Activated CD4-positive, alpha-beta memory T cell treated with anti-CD3 and anti-CD28 coated beads for 36 hours (primary cell): ENCODE measurements at regions of chr9 and their contacts with region 1.

Region 1: GRCh38 chr9:94213511-94214124 is 45.5 kb upstream of the ZNF169 start:
- DNase-seq: peak; percentile 82
- H3K4me3 Mint-ChIP-seq: no peak overlapping the region
- H3K27ac Mint-ChIP-seq: no peak overlapping the region
- H3K4me1 Mint-ChIP-seq: peaks cover 3% of the 10 kb centered on the region
- H3K27me3 Mint-ChIP-seq: peaks cover 17% of the 10 kb centered on the region

Region 2: GRCh38 chr9:93682232-93682968 is 531.2 kb before region 1 on chr9:
- CTCF ChIA-PET with region 1: interaction called, 11 read pairs
- POLR2A ChIA-PET with region 1: no interaction called
- intact Hi-C with region 1: loop called (anchors 5 kb)
- DNase-seq: peak; percentile 76
- H3K4me3 Mint-ChIP-seq: no peak overlapping the region
- H3K27ac Mint-ChIP-seq: no peak overlapping the region
- H3K4me1 Mint-ChIP-seq: no peaks in the 10 kb centered on the region
- H3K27me3 Mint-ChIP-seq: peaks cover 6% of the 10 kb centered on the region

Region 3: DNA sequence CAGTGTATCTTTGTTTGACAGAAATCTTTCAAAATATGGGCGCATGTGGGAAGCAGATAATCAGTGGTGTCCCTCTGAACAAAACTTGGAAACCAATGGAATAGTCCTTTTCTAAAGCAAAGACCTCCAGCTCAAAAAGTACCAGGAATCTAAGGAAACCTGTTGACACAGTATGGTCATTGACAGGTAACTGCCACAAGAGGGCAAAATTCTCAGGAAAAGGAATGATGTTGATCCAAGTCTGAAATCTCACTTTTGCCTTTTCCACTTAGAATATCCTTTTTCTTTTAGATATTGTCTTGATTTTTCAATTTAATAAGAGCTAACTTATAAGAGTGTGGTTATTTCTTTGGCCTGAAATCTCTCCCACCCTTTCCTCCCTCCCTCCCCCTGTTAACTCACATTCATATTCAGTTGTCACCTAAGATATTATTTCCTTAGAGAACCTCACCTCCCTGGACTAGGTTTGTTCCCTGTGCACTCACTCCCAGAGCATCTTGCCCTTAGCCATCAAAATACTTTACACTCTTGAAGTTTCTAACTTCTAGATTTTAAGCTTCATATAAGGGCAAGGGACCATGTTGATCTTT is 199.5 kb before region 1 on chr9:
- CTCF ChIA-PET with region 1: interaction called, 87 read pairs
- POLR2A ChIA-PET with region 1: no interaction called
- intact Hi-C with region 1: loop called (anchors 1 kb)
- DNase-seq: no peak
- H3K4me3 Mint-ChIP-seq: no peak overlapping the region
- H3K27ac Mint-ChIP-seq: no peak overlapping the region
- H3K4me1 Mint-ChIP-seq: peaks cover 5% of the 10 kb centered on the region
- H3K27me3 Mint-ChIP-seq: no peaks in the 10 kb centered on the region

Region 4: GRCh38 chr9:94065535-94065961 is 148.1 kb before region 1 on chr9:
- CTCF ChIA-PET with region 1: interaction called, 291 read pairs
- POLR2A ChIA-PET with region 1: no interaction called
- intact Hi-C with region 1: loop called (anchors 1 kb)
- DNase-seq: peak; percentile 78
- H3K4me3 Mint-ChIP-seq: no peak overlapping the region
- H3K27ac Mint-ChIP-seq: no peak overlapping the region
- H3K4me1 Mint-ChIP-seq: no peaks in the 10 kb centered on the region
- H3K27me3 Mint-ChIP-seq: no peaks in the 10 kb centered on the region

Region 5: DNA sequence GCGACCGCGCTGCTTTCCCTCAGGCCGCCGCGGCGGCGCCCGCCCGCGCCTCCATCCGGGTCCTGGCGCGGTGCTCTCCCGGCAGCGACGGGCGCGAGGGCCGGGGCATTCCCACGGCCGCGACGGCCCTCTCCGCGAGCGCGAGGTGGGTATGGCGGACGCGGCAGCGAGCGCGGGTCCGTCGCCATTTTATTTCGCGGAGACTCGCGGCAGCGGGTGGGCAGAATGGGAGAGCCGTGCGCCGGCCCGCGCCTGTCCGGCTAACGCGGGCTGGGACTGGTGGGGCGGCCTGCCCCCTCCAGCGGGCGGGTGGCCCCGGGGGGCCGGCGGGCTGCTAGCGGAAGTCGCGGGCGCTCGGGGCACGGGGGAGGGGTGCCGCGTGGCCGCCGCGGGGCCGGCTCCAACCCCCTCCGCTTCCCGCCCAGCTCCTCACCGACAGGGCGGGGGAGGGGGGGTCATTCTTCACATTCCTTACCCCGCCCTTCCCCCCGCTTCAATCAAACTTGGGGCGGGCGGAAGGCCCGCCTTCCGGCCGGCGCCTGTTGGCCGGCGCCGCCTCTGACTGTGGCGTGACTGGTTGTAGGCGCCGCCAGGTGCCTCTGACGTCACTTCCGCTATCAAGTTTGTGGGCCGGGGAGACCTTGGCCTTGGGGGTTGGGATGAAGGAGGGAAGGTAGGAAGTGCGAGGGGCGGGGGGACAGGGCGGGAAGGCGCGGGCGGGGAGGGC is 47.2 kb before region 1 on chr9:
- CTCF ChIA-PET with region 1: interaction called, 17 read pairs
- POLR2A ChIA-PET with region 1: no interaction called
- intact Hi-C with region 1: loop called (anchors 5 kb)
- DNase-seq: peak; percentile 97
- H3K4me3 Mint-ChIP-seq: peak overlapping the region; percentile 81
- H3K27ac Mint-ChIP-seq: peak overlapping the region; percentile 81
- H3K4me1 Mint-ChIP-seq: peaks cover 43% of the 10 kb centered on the region
- H3K27me3 Mint-ChIP-seq: no peaks in the 10 kb centered on the region